Prostate gland (tissue), 2 donors: ENCODE measurements at regions of chr3 and their contacts with region 1.

Region 1: DNA sequence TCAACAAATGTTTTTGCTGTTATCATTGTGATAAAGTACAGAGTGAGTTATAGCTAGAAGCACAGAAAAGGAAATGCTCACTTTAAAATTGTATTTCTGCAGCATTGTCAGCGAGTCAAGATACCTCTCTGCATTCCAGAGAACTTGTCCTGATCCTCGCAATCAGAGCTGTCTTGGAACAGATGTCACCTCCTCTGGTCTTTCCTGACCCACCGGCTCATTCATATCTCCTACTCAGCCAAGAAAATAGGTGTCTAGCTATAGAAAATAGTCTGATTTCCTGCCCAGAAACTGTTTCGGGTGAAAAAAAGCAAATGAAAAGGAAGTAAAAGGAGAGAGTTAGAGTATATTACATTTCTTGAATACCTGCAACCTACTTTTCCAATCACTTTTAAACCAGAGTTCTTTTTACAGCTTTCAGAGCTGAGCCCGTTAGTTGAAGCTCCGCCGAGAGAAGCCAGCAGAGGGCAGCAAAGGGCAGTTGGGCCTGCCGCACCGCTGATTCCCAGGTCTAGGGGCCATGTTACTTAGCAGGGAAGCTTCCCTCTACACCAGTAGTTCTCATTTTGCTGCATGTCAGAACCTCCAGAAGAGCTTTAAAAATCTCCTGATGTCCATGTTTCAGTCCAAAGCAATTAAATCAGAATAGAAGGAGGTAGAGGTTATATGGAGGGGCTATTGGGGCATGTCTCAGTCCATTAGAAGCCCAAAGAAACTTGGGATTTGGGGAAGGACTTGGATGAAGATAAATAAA is 185.7 kb upstream of the THRB start:
- DNase-seq: peak; percentile 20
- H3K4me3 ChIP-seq: no peak overlapping the region
- H3K27ac ChIP-seq: no peak overlapping the region
- H3K4me1 ChIP-seq: no peaks in the 10 kb centered on the region
- H3K27me3 ChIP-seq: no peaks in the 10 kb centered on the region
- CTCF ChIP-seq: peak; percentile 40 to 57 (median 48)
- POLR2A ChIP-seq: no peak

Region 2: GRCh38 chr3:23999012-23999641 is 681.3 kb before region 1 on chr3:
- intact Hi-C with region 1: loop called (anchors 5 kb)
- DNase-seq: peak; percentile 58
- H3K4me3 ChIP-seq: no peak overlapping the region
- H3K27ac ChIP-seq: no peak overlapping the region
- H3K4me1 ChIP-seq: no peaks in the 10 kb centered on the region
- H3K27me3 ChIP-seq: no peaks in the 10 kb centered on the region
- CTCF ChIP-seq: peak; percentile 59 to 94 (median 86)
- POLR2A ChIP-seq: no peak

Region 3: GRCh38 chr3:24185738-24186384 is 494.5 kb before region 1 on chr3:
- intact Hi-C with region 1: loop called (anchors 10 kb)
- DNase-seq: peak; percentile 31
- H3K4me3 ChIP-seq: no peak overlapping the region
- H3K27ac ChIP-seq: no peak overlapping the region
- H3K4me1 ChIP-seq: no peaks in the 10 kb centered on the region
- H3K27me3 ChIP-seq: no peaks in the 10 kb centered on the region
- CTCF ChIP-seq: peak; percentile 33 to 68 (median 62)
- POLR2A ChIP-seq: no peak

Region 4: DNA sequence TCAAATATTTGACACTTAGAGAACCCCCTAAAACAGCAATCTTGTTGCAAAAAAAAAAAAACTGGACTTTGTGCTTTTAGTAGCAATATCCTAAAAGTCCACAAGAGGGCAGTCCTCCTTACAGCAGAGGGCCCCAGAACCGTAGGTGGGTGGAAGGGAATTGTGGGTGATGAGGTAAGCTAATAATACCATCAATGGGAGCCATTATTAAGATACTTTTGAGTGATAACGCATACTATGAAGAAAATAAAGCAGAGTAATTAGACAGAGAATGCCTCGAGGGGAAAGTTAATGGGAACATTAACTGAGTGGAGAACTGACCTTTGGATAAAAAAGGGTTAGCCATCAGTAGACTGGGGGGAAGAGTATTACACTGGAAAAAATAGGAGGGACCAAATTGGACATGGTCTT is 415.6 kb before region 1 on chr3:
- intact Hi-C with region 1: loop called (anchors 5 kb)
- DNase-seq: no peak
- H3K4me3 ChIP-seq: no peak overlapping the region
- H3K27ac ChIP-seq: no peak overlapping the region
- H3K4me1 ChIP-seq: no peaks in the 10 kb centered on the region
- H3K27me3 ChIP-seq: no peaks in the 10 kb centered on the region
- CTCF ChIP-seq: peak; percentile 53 to 66 (median 60)
- POLR2A ChIP-seq: no peak

Region 5: GRCh38 chr3:24521420-24522145 is 158.8 kb before region 1 on chr3:
- intact Hi-C with region 1: loop called (anchors 10 kb)
- DNase-seq: peak; percentile 36
- H3K4me3 ChIP-seq: peak overlapping the region; percentile 62 to 74
- H3K27ac ChIP-seq: peak overlapping the region; percentile 71 to 76
- H3K4me1 ChIP-seq: no peaks in the 10 kb centered on the region
- H3K27me3 ChIP-seq: no peaks in the 10 kb centered on the region
- CTCF ChIP-seq: peak in 2 of 4 experiments; percentile 14
- POLR2A ChIP-seq: no peak

Region 6: DNA sequence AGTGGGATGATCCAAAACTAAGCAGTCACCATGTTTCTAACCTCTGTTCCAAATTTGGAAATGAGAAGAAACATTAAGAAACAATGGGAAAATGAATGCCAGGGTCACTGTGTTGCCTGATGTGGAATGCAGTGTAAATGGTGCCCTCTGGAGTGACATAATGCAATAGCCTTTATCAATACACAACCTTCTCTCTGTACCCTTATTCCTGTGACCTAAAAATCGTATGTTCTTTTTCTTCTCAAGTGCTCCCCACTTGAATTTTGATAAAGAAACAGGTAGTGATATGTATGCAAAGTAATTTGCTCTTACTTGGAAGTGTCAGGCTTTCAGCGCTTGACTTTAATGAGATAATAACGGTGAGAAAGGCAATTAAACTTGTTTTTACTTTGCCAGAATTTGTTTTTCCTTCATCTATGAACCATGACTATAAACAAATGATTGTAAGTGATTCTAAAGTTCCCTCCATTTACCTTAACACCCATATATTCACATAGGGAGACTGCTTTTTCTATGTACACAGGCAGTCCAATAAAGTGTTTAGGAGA is 40.0 kb before region 1 on chr3:
- intact Hi-C with region 1: no loop called
- DNase-seq: no peak
- H3K4me3 ChIP-seq: no peak overlapping the region
- H3K27ac ChIP-seq: no peak overlapping the region
- H3K4me1 ChIP-seq: no peaks in the 10 kb centered on the region
- H3K27me3 ChIP-seq: no peaks in the 10 kb centered on the region
- CTCF ChIP-seq: peak in 3 of 4 experiments; percentile 24 to 59 (median 48)
- POLR2A ChIP-seq: no peak

Region 7: GRCh38 chr3:24843955-24844354 is 163.6 kb after region 1 on chr3:
- intact Hi-C with region 1: no loop called
- DNase-seq: peak; percentile 37
- H3K4me3 ChIP-seq: no peak overlapping the region
- H3K27ac ChIP-seq: no peak overlapping the region
- H3K4me1 ChIP-seq: no peaks in the 10 kb centered on the region
- H3K27me3 ChIP-seq: no peaks in the 10 kb centered on the region
- CTCF ChIP-seq: no peak
- POLR2A ChIP-seq: no peak

Region 8: DNA sequence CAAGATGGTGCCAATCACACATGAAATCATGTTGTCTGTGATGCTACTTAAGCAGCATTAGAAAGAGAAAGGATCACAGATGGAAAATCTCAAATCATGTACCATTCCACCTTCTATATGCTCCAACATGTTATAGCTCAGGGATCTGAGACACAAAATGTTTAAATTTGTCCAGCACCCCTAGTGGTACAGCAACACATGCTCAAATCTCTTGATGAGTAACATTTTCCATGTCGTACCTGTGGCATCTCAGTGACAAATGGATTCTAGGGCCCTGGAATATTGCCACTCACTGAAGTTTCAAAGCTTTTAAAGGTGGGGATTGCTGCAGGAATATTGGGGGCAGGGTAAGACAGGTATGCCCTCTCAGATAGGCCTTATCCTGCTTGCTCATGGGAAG is 233.6 kb after region 1 on chr3:
- intact Hi-C with region 1: no loop called
- DNase-seq: no peak
- H3K4me3 ChIP-seq: no peak overlapping the region
- H3K27ac ChIP-seq: no peak overlapping the region
- H3K4me1 ChIP-seq: no peaks in the 10 kb centered on the region
- H3K27me3 ChIP-seq: no peaks in the 10 kb centered on the region
- CTCF ChIP-seq: no peak
- POLR2A ChIP-seq: no peak

Region 9: DNA sequence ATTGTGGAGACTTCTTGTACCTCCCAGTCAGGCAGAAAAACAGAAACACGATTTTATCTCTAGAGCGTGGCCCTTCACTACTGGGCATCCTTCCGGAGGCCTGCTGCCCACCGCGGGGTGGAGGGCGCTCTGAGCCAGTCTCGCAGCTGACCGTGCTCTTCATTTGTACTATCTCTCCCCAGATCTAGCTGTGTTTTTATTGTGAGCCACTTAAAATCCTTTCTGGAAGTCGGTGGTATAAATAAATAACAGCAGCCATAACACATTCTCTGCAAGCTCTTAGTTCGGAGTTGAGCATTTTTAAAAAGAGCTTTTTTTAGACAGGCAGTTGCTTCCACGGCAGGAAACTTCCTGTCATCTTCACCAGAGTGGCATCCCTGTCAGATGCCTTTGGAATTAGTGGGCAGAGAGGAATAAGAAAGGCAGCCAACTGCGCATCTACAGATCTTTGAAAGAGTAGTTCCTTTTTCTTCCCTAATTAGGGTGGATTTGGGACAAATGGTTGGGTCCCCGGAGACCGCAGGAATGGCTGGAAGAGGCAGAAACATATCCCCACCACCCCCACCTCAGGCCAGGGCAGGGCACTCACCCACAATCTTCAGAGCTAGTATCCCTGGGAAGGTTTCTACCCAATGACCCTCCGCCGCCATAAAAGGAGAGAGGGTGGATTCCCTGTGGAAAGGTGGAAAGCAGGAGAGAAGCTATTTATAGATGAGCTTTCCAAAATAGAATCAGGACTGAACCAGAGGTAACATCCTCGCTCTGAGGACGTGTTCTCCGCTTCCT is 893.2 kb after region 1 on chr3:
- intact Hi-C with region 1: no loop called
- DNase-seq: no peak
- H3K4me3 ChIP-seq: no peak overlapping the region
- H3K27ac ChIP-seq: peak overlapping the region; percentile 49 to 60
- H3K4me1 ChIP-seq: no peaks in the 10 kb centered on the region
- H3K27me3 ChIP-seq: no peaks in the 10 kb centered on the region
- CTCF ChIP-seq: no peak
- POLR2A ChIP-seq: no peak